CD4-positive, alpha-beta memory T cell (primary cell): ENCODE measurements at regions of chr11 and their contacts with region 1.

Region 1: GRCh38 chr11:96149743-96150555 is 193.0 kb downstream of the MAML2 start:
- DNase-seq: no peak
- H3K4me3 ChIP-seq: no peak overlapping the region
- H3K4me3 Mint-ChIP-seq: no peak overlapping the region
- H3K27ac ChIP-seq: no peak overlapping the region
- H3K27ac Mint-ChIP-seq: no peak overlapping the region
- H3K4me1 ChIP-seq: peaks cover 6% of the 10 kb centered on the region
- H3K4me1 Mint-ChIP-seq: peaks cover 12 to 50% (median 26%) of the 10 kb centered on the region in 4 donors
- H3K27me3 ChIP-seq: no peaks in the 10 kb centered on the region
- H3K27me3 Mint-ChIP-seq: no peaks in the 10 kb centered on the region

Region 2: DNA sequence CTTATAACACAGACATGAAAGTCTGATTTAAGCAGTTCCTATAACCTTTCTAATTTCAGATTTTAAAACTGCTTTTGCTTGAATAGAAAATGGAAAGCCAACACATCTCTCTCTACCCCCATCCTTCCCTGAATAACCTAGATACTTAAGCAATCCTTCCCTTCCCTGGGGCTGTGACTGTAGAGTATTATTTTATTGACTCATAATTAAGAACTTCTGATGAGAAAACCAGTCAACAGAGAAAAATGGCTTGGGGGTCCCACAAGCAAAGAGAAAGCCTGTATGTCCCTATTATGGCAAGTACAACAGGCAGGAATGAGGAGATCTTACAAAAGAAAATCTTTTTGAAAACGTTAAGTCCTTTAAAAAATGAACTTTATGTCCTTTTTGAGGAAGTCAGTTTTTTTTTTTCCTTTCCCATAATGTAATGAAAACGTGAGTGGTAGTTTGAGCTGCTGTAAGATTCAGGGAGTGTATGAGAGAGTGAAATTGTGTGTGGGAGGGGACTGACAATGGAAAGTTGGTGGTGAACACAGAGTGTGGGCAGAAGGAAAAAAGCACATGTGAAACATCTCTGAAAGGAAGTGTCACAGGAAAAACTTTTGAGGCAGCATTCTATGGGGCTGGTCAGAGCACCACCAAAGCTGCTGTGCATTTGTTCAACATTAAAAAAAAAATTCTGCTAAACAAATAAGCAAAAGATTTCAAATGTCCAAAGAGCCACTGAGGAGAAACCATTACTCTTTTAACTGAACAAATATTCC is 38.5 kb after region 1 on chr11:
- CTCF ChIA-PET with region 1: no interaction called
- POLR2A ChIA-PET with region 1: no interaction called
- intact Hi-C with region 1: loop called (anchors 5 kb)
- DNase-seq: no peak
- H3K4me3 ChIP-seq: no peak overlapping the region
- H3K4me3 Mint-ChIP-seq: peak overlapping the region in 7 of 8 donors; percentile 18 to 76 (median 40)
- H3K27ac ChIP-seq: no peak overlapping the region
- H3K27ac Mint-ChIP-seq: peak overlapping the region in 6 of 7 donors; percentile 0 to 88 (median 42)
- H3K4me1 ChIP-seq: peaks cover 37% of the 10 kb centered on the region
- H3K4me1 Mint-ChIP-seq: peaks cover 37 to 71% (median 53%) of the 10 kb centered on the region in 4 donors
- H3K27me3 ChIP-seq: no peaks in the 10 kb centered on the region
- H3K27me3 Mint-ChIP-seq: no peaks in the 10 kb centered on the region